Heart left ventricle (tissue), 16 donors: ENCODE measurements at regions of chr5 and their contacts with region 1.

Region 1: DNA sequence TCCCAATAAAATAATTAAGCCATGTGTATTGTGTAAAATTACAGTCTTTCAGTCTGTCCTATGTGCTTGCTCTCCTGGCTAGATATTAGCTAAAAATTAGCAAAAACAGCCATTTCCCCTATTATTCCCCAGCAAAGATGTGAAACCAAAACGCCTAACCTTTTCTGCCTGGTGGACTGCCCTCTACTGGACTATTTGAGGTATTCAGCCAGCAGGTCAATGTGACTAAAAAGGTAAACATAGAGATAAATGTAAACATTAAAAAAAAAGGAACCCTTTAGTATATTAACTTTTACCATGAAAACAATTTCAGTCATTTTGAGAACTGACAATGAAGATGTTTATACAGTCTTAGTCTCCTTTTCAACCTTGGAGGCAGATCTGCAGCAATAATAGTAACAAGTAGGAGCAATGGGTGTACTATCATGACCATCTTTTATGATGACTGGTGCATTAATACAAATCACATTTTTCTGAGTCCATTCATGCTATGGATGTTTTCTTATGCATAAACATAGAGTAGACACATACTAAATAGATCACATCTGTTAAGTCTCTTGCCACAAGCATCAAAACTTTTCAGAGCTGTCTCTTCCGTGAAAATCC is 10.1 kb downstream of the ATG12 start:
- DNase-seq: no peak
- ATAC-seq: peak in 1 of 4 donors; percentile 51
- H3K4me3 ChIP-seq: no peak overlapping the region
- H3K27ac ChIP-seq: no peak overlapping the region
- H3K4me1 ChIP-seq: no peaks in the 10 kb centered on the region
- H3K27me3 ChIP-seq: no peaks in the 10 kb centered on the region
- CTCF ChIP-seq: peak; percentile 62 to 83 (median 73)
- POLR2A ChIP-seq: no peak

Region 2: DNA sequence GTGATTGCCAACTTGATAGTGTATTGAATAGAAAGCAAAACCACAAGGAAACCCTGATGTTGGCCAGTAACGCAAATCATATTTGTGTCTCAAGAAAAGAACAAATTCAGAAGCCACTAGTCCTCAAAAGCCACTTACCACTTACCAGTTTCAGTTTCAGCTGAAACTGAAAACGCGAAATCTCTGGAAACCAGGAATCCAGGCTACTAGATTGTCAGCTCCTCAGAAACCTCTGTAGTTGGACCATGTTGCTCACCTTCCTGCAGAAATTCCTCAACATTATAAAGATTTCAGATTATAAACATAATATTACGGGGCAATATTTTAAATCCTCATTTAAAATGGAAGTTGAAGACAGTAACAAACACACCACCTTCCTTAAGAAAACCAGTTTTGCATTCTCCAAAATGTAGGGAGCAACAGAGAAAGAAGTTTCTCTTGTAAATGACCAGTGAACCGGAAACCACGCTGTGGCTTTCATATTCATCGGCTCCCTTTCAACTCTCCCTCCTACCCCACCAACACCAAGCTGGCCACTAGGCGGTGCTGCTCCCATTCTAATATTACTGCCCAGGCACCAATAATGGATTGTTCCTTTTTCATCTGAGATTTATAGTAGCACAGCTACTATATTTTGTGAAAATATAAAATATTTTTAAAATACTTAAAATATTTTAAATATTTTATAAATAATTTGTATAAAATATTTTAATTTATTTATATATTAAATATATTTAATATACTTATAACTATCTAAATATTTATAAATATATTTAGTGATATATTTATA is 196.7 kb before region 1 on chr5:
- intact Hi-C with region 1: loop called in 3 of 10 experiments (anchors 2 to 5 kb)
- DNase-seq: peak; percentile 82 to 89 (median 86)
- ATAC-seq: peak; percentile 78 to 98 (median 96)
- H3K4me3 ChIP-seq: peak overlapping the region in 10 of 12 donors; percentile 0 to 56 (median 48)
- H3K27ac ChIP-seq: peak overlapping the region in 10 of 12 donors; percentile 2 to 82 (median 50)
- H3K4me1 ChIP-seq: peaks cover 0 to 10% (median 0%) of the 10 kb centered on the region in 12 donors
- H3K27me3 ChIP-seq: no peaks in the 10 kb centered on the region
- CTCF ChIP-seq: peak; percentile 79 to 97 (median 90)
- POLR2A ChIP-seq: no peak

Region 3: DNA sequence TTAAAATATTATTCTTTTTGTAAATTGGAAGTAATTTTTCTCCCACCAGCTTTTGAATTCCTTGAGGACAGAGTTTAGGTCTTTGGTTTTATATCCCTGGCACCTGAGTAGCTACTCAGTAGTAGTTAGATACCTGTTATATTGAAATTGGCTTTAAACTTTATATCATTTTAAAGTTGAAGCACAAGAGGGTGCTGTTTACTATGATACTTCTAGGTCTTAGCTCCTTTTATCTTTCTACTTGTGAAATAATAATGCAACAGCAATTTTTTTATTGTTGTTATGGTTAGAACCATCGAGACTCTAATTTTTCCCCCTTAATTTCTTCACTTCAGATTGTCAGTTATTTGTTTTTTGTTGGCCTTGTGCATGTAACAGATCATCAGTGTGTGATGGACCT is 56.8 kb after region 1 on chr5:
- intact Hi-C with region 1: no loop called
- DNase-seq: no peak
- ATAC-seq: no peak
- H3K4me3 ChIP-seq: no peak overlapping the region
- H3K27ac ChIP-seq: no peak overlapping the region
- H3K4me1 ChIP-seq: no peaks in the 10 kb centered on the region
- H3K27me3 ChIP-seq: no peaks in the 10 kb centered on the region
- CTCF ChIP-seq: peak in 5 of 12 donors; percentile 6 to 32 (median 19)
- POLR2A ChIP-seq: no peak

Region 4: GRCh38 chr5:116084871-116085715 is 253.8 kb after region 1 on chr5 and contains the start of gene COMMD10:
- intact Hi-C with region 1: loop called in 1 of 10 experiments (anchors 10 kb)
- DNase-seq: peak; percentile 75 to 90 (median 83)
- ATAC-seq: peak; percentile 87 to 94 (median 92)
- H3K4me3 ChIP-seq: peak within 1 kb of the TSS; percentile 75 to 98 (median 91)
- H3K27ac ChIP-seq: peak within 1 kb of the TSS; percentile 64 to 97 (median 92)
- H3K4me1 ChIP-seq: peaks cover 0 to 40% (median 24%) of the 10 kb centered on the region in 12 donors
- H3K27me3 ChIP-seq: no peaks in the 10 kb centered on the region
- CTCF ChIP-seq: no peak
- POLR2A ChIP-seq: peak in 1 of 2 donors; percentile 38
- total RNA-seq, gene COMMD10: 25.2 to 42.2 (median 29.8) TPM

Region 5: GRCh38 chr5:116442095-116442534 is 610.8 kb after region 1 on chr5:
- intact Hi-C with region 1: no loop called
- DNase-seq: peak; percentile 38 to 68 (median 49)
- ATAC-seq: peak; percentile 41 to 64 (median 64)
- H3K4me3 ChIP-seq: no peak overlapping the region
- H3K27ac ChIP-seq: peak overlapping the region in 1 of 12 donors; percentile 14
- H3K4me1 ChIP-seq: peaks cover 0 to 41% (median 14%) of the 10 kb centered on the region in 12 donors
- H3K27me3 ChIP-seq: no peaks in the 10 kb centered on the region
- CTCF ChIP-seq: no peak
- POLR2A ChIP-seq: no peak